HAP-1 (cell line): ENCODE measurements at regions of chr10 and their contacts with region 1.

Region 1: DNA sequence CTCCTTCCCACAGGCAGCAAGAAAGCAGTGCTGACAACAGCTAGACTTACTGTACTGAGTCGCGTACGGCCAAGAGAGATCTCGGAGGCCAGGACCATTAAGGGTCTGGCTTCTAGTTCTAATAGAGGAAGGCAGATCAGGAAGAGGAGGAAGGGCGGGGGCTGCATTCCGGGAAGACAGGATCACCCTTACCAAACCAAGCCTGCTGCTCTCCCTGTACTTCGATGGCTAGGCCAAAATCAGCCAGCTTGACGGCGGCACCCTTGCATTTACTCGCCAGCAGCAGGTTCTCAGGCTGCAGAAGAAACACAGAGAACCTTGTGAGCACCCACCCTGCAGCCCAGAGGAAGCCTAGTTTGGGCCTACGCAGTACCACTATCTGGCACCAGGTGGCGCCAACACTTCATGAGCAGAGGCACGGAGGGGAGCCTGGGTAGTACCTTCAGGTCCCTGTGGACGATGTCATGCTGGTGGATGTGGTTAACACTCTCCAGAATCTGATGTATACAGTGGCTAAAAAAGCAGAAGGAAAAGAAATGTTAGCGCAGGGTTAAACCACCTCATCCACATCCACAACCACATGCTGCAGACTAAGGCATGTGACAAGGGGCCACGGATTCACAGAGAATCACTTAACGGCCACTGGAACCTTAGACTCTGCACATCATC is 25.4 kb downstream of the CAMK2G start:
- DNase-seq: peak; percentile 61 to 89
- H3K4me3 ChIP-seq: no peak overlapping the region
- H3K4me1 ChIP-seq: no peaks in the 10 kb centered on the region
- H3K27me3 ChIP-seq: no peaks in the 10 kb centered on the region

Region 2: GRCh38 chr10:73379064-73379748 is 469.7 kb before region 1 on chr10:
- in situ Hi-C with region 1: no loop called
- DNase-seq: no peak
- H3K4me3 ChIP-seq: no peak overlapping the region
- H3K4me1 ChIP-seq: no peaks in the 10 kb centered on the region
- H3K27me3 ChIP-seq: no peaks in the 10 kb centered on the region

Region 3: DNA sequence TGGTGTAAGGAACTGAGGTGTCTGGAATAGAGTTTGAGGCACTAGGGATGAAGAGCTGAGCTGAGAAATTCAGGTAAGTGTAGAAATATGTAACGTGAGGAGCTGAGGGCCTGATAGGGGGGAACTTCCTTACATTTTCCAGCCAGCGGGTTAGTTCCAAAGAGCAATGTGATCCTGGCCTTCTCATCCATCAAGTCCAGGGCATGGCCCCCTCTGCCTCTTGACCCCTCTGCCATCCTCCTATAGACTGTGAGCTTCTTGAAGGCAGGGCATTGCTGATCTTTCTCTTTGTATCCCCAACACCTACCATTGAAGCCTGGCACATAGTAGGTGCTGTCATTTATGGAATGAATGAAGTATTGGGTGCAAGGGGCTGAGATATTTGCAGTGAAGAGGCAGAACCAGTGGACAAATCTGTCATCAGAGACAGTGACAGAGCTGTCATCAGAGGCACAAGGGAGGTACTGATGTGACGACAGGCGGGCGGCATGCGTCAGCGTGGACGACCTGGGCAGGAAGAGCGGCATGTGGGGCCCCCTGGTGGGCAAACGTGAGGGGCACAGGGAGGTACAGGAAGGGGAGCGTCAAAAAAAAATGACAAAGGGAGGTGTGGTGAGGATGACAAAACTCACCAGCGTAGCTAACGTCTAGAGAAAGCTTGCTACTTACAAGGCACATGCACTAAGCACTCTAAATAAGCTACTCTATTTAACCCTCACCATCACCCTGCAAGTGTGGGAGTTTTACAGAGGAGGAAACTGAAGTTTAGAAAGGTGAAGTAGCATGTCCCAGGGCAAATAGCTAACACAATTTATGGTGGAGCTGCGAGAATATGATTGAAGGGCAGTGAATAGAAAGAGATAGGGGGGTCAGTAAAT is 30.6 kb after region 1 on chr10:
- in situ Hi-C with region 1: loop called (anchors 5 kb)
- DNase-seq: peak; percentile 86 to 92
- H3K4me3 ChIP-seq: no peak overlapping the region
- H3K4me1 ChIP-seq: peaks cover 7% of the 10 kb centered on the region
- H3K27me3 ChIP-seq: no peaks in the 10 kb centered on the region